BJ (cell line): ENCODE measurements at regions of chr16 and their contacts with region 1.

Region 1: DNA sequence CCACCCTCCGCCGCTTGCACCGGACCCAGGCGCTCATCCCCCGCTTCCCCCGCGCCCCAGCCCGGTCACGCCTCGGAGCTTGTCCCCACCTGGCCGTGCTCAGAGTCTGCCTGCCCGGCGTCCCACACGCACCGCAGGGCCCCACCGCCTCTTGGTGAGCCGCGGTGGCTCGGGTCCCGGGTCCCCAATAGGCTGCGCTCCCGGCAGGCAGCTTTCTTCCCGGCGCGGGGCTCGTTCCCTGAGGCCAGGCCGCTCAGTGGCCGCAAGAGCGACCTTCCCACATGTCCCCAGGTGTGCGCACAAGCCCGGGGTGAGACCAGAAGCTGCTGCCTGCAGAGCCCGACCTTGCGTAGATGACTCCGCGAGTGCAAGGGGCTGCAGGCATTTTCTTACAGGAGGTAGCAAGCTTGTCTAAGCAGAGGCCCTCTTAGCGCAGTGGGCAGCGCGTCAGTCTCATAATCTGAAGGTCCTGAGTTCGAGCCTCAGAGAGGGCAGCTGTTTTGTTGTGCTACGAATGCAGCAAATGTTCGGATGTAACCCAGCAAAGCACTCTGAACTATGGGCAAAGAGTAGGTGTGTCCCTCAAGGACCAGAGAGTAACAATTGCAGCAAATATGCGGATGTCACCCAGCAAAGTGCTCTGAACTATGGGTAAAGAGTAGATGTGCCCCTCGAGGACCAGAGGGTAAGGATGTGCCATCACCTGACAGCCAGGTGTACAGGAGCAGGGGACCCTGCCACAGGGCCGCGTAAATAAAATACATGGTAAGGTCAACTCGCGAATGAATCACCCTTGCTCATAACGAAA is 15.6 kb downstream of the TLE7 start:
- DNase-seq: no peak
- H3K4me3 ChIP-seq: peak overlapping the region; percentile 8; the same call in 1 of the 2 replicates
- H3K27me3 ChIP-seq: peaks cover 9% of the 10 kb centered on the region; the same call in 1 of the 2 replicates
- CTCF ChIP-seq: no peak

Region 2: GRCh38 chr16:71297341-71297634 is 129.0 kb before region 1 on chr16:
- CTCF ChIA-PET with region 1: no interaction called
- POLR2A ChIA-PET with region 1: no interaction called
- DNase-seq: no peak
- H3K4me3 ChIP-seq: no peak overlapping the region
- H3K27me3 ChIP-seq: 0 out of 2 replicates have a peak, but pooled peaks cover 1% of the 10 kb centered on the region
- CTCF ChIP-seq: no peak

Region 3: DNA sequence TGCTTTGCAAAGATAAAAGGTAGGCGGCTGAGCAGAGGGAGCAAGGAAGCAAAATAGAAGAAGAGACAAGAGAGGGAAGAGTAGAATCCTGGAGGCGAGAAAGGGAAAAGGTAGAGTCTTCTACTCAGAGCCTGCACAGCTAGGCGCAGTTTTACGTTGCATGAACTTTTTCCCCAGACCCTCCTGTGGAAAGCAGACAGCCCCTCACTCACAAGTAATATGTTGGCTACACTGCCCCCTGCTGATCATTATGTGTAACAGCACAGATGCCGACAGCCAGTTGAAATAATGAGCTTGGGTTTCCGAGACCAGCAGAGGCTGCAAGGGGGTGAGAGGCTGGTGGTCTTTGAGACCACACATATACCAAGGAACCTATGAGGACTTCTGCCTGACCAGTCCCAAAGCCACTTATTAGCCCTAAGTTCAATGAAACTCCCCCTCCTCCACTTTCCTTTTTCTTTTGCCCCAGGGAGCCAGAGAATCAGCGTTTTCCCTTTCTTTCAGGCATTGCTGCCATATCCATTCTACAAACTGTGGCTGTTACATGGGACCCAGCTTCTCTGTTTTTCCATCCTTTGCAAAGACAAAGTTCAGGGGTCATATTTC is 114.6 kb before region 1 on chr16:
- CTCF ChIA-PET with region 1: no interaction called
- POLR2A ChIA-PET with region 1: no interaction called
- DNase-seq: no peak
- H3K4me3 ChIP-seq: no peak overlapping the region
- H3K27me3 ChIP-seq: no peaks in the 10 kb centered on the region
- CTCF ChIP-seq: peak; percentile 70

Region 4: DNA sequence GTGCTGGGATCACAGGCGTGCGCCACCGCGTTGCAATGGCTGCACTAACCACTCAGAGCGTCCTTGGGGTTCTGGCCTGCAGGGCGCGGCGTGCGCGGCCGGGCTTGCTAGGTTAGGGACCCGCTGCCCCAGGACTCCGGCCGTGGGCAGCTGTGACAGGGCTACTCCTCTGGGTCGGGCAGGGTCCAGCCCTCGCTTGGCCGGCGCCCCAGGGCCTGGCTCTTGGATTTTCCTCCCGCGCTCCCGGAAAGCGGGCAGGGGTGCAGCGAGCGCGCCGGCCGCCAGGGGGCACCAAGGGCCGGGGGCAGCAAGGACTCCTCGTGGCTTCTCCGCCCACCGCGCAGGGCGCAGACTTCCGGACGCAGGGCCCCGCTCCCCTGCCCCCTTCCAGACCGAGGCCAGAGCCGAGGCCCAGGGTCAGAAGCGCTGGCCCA is 15.1 kb after region 1 on chr16:
- CTCF ChIA-PET with region 1: no interaction called
- POLR2A ChIA-PET with region 1: no interaction called
- DNase-seq: no peak
- H3K4me3 ChIP-seq: no peak overlapping the region
- H3K27me3 ChIP-seq: no peaks in the 10 kb centered on the region
- CTCF ChIP-seq: peak; percentile 39

Region 5: GRCh38 chr16:71499775-71500364 is 73.6 kb after region 1 on chr16:
- CTCF ChIA-PET with region 1: interaction called, 11 read pairs
- POLR2A ChIA-PET with region 1: no interaction called
- DNase-seq: no peak
- H3K4me3 ChIP-seq: no peak overlapping the region
- H3K27me3 ChIP-seq: no peaks in the 10 kb centered on the region; the same call in 1 of the 2 replicates
- CTCF ChIP-seq: peak; percentile 70